GM10248 (cell line): ENCODE measurements at regions of chr13 and their contacts with region 1.

Region 1: GRCh38 chr13:33334831-33335230 is 49.3 kb upstream of the STARD13 start:
- DNase-seq: no peak
- CTCF ChIP-seq: no peak

Region 2: GRCh38 chr13:33194820-33195692 is 139.8 kb before region 1 on chr13:
- CTCF ChIA-PET with region 1: no interaction called
- POLR2A ChIA-PET with region 1: no interaction called
- DNase-seq: peak; percentile 63
- CTCF ChIP-seq: no peak

Region 3: DNA sequence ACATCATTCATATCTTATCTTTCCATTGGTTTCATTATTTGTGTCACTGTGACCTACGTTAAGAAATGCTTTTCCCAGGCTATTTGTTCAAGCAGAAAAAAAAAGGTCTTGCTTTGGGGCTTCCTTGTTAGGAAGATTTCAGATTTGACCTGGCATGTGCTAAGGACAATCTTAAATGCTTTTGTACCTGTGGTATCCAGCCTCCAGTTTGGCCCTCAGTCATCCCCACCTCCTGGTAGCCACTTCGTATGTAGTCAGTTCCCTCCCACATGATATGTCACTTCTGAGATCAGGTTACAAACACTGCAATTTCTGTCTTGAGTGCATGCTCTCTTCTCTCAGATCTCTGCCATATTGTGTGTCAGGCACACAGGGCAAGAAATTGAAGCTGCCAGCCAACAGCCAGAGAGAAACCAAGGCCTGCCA is 10.9 kb after region 1 on chr13:
- CTCF ChIA-PET with region 1: interaction called, 16 read pairs
- POLR2A ChIA-PET with region 1: no interaction called
- DNase-seq: no peak
- CTCF ChIP-seq: no peak